K562 (cell line): ENCODE measurements at regions of chr1 and their contacts with region 1.

Region 1: GRCh38 chr1:45583264-45583665 is 576 bp upstream of the NASP start:
- DNase-seq: peak; percentile 98 to 100 (median 98)
- ATAC-seq: peak; percentile 91
- H3K4me3 ChIP-seq: peak overlapping the region; percentile 88
- H3K27ac ChIP-seq: peak overlapping the region; percentile 97
- H3K4me1 ChIP-seq: peaks cover 6 to 21% of the 10 kb centered on the region in 2 experiments; a peak in 4 of 5 replicates
- H3K27me3 ChIP-seq: no peaks in the 10 kb centered on the region
- CTCF ChIP-seq: no peak
- EP300 ChIP-seq: no peak
- POLR2A ChIP-seq: no peak
- RAD21 ChIP-seq: no peak

Region 2: GRCh38 chr1:45339789-45340570 is 243.3 kb before region 1 on chr1 and contains the starts of genes MUTYH and TOE1:
- CTCF ChIA-PET with region 1: no interaction called
- POLR2A ChIA-PET with region 1: interaction called, 25 read pairs
- in situ Hi-C with region 1: no loop called
- intact Hi-C with region 1: no loop called
- DNase-seq: peak; percentile 98 to 99 (median 98)
- ATAC-seq: peak; percentile 95
- H3K4me3 ChIP-seq: peak within 1 kb of the TSS; percentile 66
- H3K27ac ChIP-seq: peak within 1 kb of the TSS; percentile 94
- H3K4me1 ChIP-seq: peaks cover 6 to 18% of the 10 kb centered on the region in 2 experiments; a peak in 4 of 5 replicates
- H3K27me3 ChIP-seq: no peaks in the 10 kb centered on the region
- CTCF ChIP-seq: no peak
- EP300 ChIP-seq: no peak; the same call in 1 of the 2 replicates
- POLR2A ChIP-seq: peak; percentile 99
- RAD21 ChIP-seq: no peak; a peak in 1 of 4 replicates
- polyA plus RNA-seq, gene MUTYH: 3.4 to 6.2 TPM
- polyA plus RNA-seq, gene TOE1: 59.8 to 85.7 TPM

Region 3: GRCh38 chr1:45412899-45413298 is 170.4 kb before region 1 on chr1:
- CTCF ChIA-PET with region 1: no interaction called
- POLR2A ChIA-PET with region 1: no interaction called
- in situ Hi-C with region 1: no loop called
- intact Hi-C with region 1: no loop called
- DNase-seq: no peak
- ATAC-seq: no peak; the same call in 2 of the 3 replicates
- H3K4me3 ChIP-seq: no peak overlapping the region
- H3K27ac ChIP-seq: no peak overlapping the region
- H3K4me1 ChIP-seq: peaks cover 4 to 19% of the 10 kb centered on the region in 2 experiments; a peak in 4 of 5 replicates
- H3K27me3 ChIP-seq: no peaks in the 10 kb centered on the region
- CTCF ChIP-seq: 0 out of 6 replicates have a peak, but pooled peaks of 1 of the 3 experiments have one; percentile 1
- EP300 ChIP-seq: no peak
- POLR2A ChIP-seq: no peak
- RAD21 ChIP-seq: peak; percentile 14 to 23; a peak in 3 of 4 replicates

Region 4: DNA sequence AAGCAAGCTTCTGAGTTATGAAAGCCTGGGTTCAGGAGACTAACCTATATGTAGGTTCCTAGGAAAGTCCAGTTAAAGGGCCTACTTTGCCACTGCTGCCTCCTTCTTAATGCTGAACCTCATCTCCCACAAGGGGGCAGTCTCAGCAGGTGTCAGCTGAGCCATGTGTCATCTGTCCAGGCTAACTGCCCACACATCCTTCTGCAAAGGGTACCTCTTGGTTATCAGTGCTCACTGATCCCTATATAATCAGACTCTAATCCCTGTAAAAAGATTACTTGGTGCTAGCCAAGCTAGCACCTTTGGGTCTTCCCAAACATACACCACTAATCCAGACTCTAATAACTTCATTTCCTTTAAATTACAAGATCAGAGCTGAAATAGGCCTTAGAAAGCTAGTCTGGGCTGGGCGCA is 70.6 kb before region 1 on chr1:
- CTCF ChIA-PET with region 1: no interaction called
- POLR2A ChIA-PET with region 1: interaction called, 26 read pairs
- in situ Hi-C with region 1: no loop called
- intact Hi-C with region 1: no loop called
- DNase-seq: peak; percentile 57 to 88 (median 67)
- ATAC-seq: peak; percentile 78
- H3K4me3 ChIP-seq: no peak overlapping the region
- H3K27ac ChIP-seq: no peak overlapping the region
- H3K4me1 ChIP-seq: no peaks in the 10 kb centered on the region; a peak in 1 of 5 replicates
- H3K27me3 ChIP-seq: no peaks in the 10 kb centered on the region
- CTCF ChIP-seq: peak; percentile 84 to 89 (median 86)
- EP300 ChIP-seq: no peak
- POLR2A ChIP-seq: no peak
- RAD21 ChIP-seq: peak; percentile 87 to 95

Region 5: DNA sequence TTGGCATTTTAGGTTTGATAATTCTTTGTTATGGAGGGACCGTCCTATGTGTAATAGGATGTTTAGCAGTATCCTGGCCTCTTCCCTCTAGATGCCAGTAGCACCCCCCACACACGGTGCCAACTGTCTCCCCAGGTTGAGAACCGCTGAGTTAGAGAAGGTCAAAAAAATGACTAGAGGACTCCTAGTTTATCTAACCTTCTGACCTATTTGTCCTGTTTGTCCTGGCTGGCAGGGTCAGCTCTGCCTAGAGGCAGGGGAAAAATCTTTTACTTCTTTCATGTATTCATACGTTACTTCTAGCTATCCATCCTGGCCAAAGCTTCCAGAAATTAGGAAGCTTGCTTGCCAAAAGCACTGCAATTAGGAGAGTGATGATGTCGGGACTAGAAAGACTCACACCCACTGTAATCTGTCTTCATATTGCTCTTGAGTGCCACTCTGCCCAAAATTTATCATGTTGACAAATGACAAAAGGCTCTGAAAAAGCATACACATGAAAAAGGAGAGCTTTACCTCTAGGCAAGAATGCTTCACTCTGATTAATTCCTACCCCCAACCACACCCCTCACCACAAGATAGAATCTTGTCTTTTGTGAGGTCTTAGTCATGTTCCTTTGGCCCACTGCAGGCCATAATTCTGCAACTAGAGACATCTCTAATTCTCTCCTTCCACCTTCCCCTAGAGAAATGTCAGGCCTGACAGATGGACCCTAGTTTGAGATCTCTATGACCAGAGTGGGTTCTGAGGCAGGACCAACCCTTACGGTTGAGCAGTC is 47.1 kb before region 1 on chr1:
- CTCF ChIA-PET with region 1: no interaction called
- POLR2A ChIA-PET with region 1: interaction called, 20 read pairs
- in situ Hi-C with region 1: no loop called
- intact Hi-C with region 1: no loop called
- DNase-seq: peak in 1 of 4 experiments; percentile 49
- ATAC-seq: peak; percentile 82
- H3K4me3 ChIP-seq: no peak overlapping the region
- H3K27ac ChIP-seq: no peak overlapping the region
- H3K4me1 ChIP-seq: peaks cover 0 to 16% of the 10 kb centered on the region in 2 experiments; a peak in 4 of 5 replicates
- H3K27me3 ChIP-seq: no peaks in the 10 kb centered on the region
- CTCF ChIP-seq: no peak
- EP300 ChIP-seq: no peak
- POLR2A ChIP-seq: no peak
- RAD21 ChIP-seq: no peak

Region 6: DNA sequence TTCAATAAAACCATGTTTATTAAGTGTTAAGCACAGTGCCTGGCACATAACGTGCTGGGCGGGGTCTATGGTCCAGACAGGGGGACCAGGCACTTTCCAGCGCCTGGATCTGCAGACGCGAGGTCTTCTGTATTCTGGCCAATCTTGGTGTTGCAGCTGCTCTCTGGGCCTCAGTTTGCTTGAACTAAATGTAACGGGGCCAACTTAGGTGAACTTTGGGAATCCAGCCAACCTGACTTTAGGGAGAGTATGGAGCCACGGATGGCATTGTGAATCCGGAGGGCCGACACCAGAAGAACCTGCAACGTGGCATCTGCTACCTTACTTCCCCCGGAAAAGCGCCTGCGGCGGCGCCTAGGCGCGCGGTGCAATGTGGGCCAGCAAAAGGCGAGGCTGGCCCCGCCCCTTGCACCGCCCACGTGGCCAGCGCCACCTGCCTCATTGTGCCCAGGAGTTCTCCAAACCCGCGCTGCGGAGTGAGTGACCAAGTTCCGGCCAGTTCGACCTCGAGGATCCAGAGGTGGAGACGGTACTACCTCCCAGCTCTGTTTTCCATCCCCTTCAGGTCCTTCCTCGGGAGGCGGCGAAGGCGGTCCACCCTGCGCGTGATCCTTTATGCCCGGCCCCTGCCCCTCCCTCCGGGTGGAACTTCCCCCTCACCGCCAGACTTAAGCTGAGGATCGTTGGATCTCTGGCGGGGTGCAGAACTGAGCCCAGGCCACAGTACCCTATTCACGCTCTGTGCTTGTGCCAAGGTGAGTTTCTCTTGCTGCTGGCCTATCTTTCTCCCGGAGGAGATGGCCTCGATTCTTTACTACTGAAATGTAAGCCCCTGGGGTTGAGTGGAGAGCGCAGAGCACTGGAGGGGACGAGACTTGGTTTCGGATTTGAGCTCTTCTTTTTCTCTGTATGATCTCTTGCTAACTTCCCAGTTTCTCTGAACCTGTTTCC is 32.6 kb before region 1 on chr1 and contains the start of gene AKR1A1:
- CTCF ChIA-PET with region 1: no interaction called
- POLR2A ChIA-PET with region 1: interaction called, 22 read pairs
- in situ Hi-C with region 1: no loop called
- intact Hi-C with region 1: no loop called
- DNase-seq: peak; percentile 90 to 97 (median 92)
- ATAC-seq: peak; percentile 98
- H3K4me3 ChIP-seq: peak within 1 kb of the TSS; percentile 72
- H3K27ac ChIP-seq: peak within 1 kb of the TSS; percentile 92
- H3K4me1 ChIP-seq: peaks cover 10 to 17% of the 10 kb centered on the region in 2 experiments; a peak in 3 of 5 replicates
- H3K27me3 ChIP-seq: no peaks in the 10 kb centered on the region; a peak in 1 of 5 replicates
- CTCF ChIP-seq: peak in 2 of 3 experiments; percentile 4 to 11; a peak in 1 of 6 replicates
- EP300 ChIP-seq: peak; percentile 21; the same call in 1 of the 2 replicates
- POLR2A ChIP-seq: peak; percentile 96
- RAD21 ChIP-seq: peak in 1 of 2 experiments; percentile 15; a peak in 1 of 4 replicates
- polyA plus RNA-seq, gene AKR1A1: 68.6 to 114 TPM

Region 7: GRCh38 chr1:45569962-45570581 is 13.2 kb before region 1 on chr1:
- CTCF ChIA-PET with region 1: no interaction called
- POLR2A ChIA-PET with region 1: interaction called, 135 read pairs
- in situ Hi-C with region 1: no loop called
- intact Hi-C with region 1: no loop called
- DNase-seq: peak; percentile 67 to 86 (median 74)
- ATAC-seq: peak; percentile 87
- H3K4me3 ChIP-seq: no peak overlapping the region
- H3K27ac ChIP-seq: no peak overlapping the region
- H3K4me1 ChIP-seq: peaks cover 11 to 22% of the 10 kb centered on the region in 2 experiments
- H3K27me3 ChIP-seq: no peaks in the 10 kb centered on the region
- CTCF ChIP-seq: peak; percentile 95 to 99 (median 98)
- EP300 ChIP-seq: 0 out of 2 replicates have a peak, but pooled peaks have one; percentile 8
- POLR2A ChIP-seq: no peak
- RAD21 ChIP-seq: peak; percentile 94 to 97

Region 8: DNA sequence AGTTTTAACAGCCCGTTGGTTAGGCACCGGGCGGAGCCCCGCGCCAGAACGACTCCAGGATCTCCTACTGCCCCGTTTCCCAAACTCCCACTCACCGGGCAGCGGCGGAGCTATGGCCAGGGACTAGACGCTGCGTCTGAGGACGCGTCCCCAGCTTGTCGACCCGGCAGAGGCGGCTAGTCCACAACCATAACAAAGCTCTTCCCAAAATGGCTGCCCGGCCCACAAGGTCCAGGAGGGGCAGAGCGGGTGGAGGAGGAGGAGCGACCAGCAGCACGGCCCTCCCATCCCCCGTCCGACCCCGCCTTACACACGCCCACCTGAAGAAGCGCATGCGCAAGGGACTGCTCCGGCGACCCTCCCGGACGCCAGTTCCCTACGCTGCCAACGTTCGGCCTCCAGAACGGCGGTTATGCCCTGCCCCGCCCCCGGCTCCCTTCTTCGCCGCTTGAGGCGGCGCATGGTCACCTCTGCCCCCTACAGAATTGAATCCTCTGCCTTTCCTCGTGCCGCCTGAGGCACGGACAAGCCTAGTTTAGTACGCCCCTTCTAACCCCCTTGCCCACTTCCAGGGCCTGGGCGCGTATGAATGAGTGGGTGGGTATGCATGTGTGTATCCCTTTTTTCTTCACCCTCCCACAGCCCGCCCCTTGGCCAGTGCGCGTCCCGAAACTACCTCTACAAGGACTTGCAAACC is 103.2 kb after region 1 on chr1 and contains the start of gene GPBP1L1:
- CTCF ChIA-PET with region 1: no interaction called
- POLR2A ChIA-PET with region 1: interaction called, 13 read pairs
- in situ Hi-C with region 1: no loop called
- intact Hi-C with region 1: loop called (anchors 5 kb)
- DNase-seq: peak; percentile 98 to 100 (median 99)
- ATAC-seq: peak; percentile 86
- H3K4me3 ChIP-seq: peak within 1 kb of the TSS; percentile 87
- H3K27ac ChIP-seq: peak within 1 kb of the TSS; percentile 98
- H3K4me1 ChIP-seq: peaks cover 11 to 33% of the 10 kb centered on the region in 2 experiments
- H3K27me3 ChIP-seq: no peaks in the 10 kb centered on the region
- CTCF ChIP-seq: 0 out of 6 replicates have a peak, but pooled peaks of 1 of the 3 experiments have one; percentile 1
- EP300 ChIP-seq: no peak
- POLR2A ChIP-seq: peak; percentile 88
- RAD21 ChIP-seq: no peak
- polyA plus RNA-seq, gene GPBP1L1: 86.0 to 128 TPM